ENCODE measurements at regions of chr3 and their contacts with region 1.

Region 1: GRCh38 chr3:114827495-114827894 is 319.6 kb downstream of the ZBTB20 start:
- DNase-seq: peak; percentile 66
- ATAC-seq: peak; percentile 89
- H3K4me3 ChIP-seq: no peak overlapping the region
- H3K27ac ChIP-seq: no peak overlapping the region
- H3K4me1 ChIP-seq: no peaks in the 10 kb centered on the region
- H3K27me3 ChIP-seq: no peaks in the 10 kb centered on the region
- CTCF ChIP-seq: peak; percentile 68
- EP300 ChIP-seq: no peak
- POLR2A ChIP-seq: no peak
- RAD21 ChIP-seq: peak; percentile 62

Region 2: DNA sequence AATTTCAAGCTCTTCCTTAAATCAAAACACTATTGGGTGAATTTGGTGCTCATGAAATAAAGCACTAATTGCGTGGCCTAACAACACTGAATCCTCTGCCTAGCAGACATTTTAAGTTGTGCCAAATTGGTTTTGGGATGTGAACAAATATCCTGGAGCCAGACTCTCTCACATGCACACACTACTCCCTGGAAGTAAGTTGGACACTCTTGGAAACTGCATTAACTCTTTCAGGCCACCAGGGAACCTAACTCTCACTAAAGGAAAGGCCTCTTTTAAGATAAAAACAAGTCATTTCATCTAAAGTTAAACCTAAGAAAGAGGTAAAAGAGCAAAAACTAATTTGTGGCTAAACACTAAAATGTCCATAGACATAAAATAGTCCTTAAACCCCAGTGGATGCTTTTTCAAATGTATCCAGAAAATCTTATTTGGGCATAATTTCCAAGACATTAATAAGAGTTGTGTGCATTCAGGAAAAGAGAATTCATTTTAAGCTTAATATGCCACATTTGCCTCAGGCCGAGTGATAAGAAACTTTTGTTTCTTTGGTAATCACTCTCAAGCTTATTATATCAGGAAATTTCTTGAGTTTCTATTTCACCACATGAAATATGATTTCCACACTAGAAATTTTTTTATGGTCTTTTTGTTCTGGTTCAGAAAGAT is 257.8 kb after region 1 on chr3:
- CTCF ChIA-PET with region 1: no interaction called
- POLR2A ChIA-PET with region 1: no interaction called
- in situ Hi-C with region 1: loop called (anchors 10 kb)
- intact Hi-C with region 1: no loop called
- DNase-seq: no peak
- ATAC-seq: peak; percentile 62; the same call in 2 of the 3 replicates
- H3K4me3 ChIP-seq: no peak overlapping the region
- H3K27ac ChIP-seq: no peak overlapping the region
- H3K4me1 ChIP-seq: no peaks in the 10 kb centered on the region
- H3K27me3 ChIP-seq: no peaks in the 10 kb centered on the region; a peak in 1 of 5 replicates
- CTCF ChIP-seq: no peak
- EP300 ChIP-seq: no peak
- POLR2A ChIP-seq: no peak
- RAD21 ChIP-seq: no peak

Region 3: GRCh38 chr3:115092220-115092791 is 264.8 kb after region 1 on chr3:
- CTCF ChIA-PET with region 1: interaction called, 8 read pairs
- POLR2A ChIA-PET with region 1: no interaction called
- in situ Hi-C with region 1: loop called (anchors 10 kb)
- intact Hi-C with region 1: loop called (anchors 1 kb)
- DNase-seq: peak; percentile 34
- ATAC-seq: peak; percentile 100
- H3K4me3 ChIP-seq: no peak overlapping the region
- H3K27ac ChIP-seq: no peak overlapping the region
- H3K4me1 ChIP-seq: no peaks in the 10 kb centered on the region
- H3K27me3 ChIP-seq: no peaks in the 10 kb centered on the region
- CTCF ChIP-seq: peak; percentile 65
- EP300 ChIP-seq: no peak
- POLR2A ChIP-seq: no peak
- RAD21 ChIP-seq: no peak

Measured in HepG2 (cell line).